ENCODE measurements at regions of chr14 and their contacts with region 1.

Region 1: DNA sequence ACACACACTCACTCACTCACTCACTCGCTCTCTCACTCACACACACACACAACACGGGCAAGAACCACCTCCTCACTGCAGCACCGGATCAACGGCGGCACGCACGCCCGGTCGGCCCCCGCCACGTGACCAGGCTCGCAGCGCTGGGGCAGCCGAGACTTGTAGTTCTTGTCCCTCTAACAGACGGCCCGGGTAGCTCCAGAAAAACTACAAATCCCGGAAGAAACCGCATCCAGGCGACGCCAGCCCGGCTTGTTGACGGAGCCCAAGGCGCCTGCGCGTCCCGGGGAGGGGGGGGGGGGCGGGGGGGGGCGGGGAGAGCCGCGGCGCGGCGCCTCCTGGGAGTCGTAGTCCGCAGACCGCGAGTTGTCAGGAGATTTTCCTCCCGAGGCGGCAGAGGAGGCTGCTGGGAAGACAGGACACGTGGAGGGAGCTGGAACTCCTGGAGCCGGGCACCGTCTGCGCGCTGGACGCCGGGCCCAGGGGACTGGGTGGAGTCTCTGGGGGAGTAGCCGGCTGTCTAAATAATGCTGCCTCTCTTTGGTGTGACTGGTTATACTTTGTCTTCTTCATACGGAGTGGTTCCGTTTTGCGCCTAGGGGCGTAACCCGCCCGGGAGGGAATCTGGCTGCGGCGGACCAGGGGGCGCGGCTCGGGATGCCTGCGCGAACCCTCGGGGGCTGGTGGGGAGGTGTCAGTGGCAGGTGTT is at the start of gene MAX:
- DNase-seq: peak; percentile 99
- H3K4me3 Mint-ChIP-seq: peak within 1 kb of the TSS; percentile 87
- H3K27ac Mint-ChIP-seq: peak within 1 kb of the TSS; percentile 91
- H3K4me1 Mint-ChIP-seq: peaks cover 30% of the 10 kb centered on the region
- H3K27me3 Mint-ChIP-seq: no peaks in the 10 kb centered on the region
- total RNA-seq, gene MAX: 67.9 to 75.1 TPM

Region 2: DNA sequence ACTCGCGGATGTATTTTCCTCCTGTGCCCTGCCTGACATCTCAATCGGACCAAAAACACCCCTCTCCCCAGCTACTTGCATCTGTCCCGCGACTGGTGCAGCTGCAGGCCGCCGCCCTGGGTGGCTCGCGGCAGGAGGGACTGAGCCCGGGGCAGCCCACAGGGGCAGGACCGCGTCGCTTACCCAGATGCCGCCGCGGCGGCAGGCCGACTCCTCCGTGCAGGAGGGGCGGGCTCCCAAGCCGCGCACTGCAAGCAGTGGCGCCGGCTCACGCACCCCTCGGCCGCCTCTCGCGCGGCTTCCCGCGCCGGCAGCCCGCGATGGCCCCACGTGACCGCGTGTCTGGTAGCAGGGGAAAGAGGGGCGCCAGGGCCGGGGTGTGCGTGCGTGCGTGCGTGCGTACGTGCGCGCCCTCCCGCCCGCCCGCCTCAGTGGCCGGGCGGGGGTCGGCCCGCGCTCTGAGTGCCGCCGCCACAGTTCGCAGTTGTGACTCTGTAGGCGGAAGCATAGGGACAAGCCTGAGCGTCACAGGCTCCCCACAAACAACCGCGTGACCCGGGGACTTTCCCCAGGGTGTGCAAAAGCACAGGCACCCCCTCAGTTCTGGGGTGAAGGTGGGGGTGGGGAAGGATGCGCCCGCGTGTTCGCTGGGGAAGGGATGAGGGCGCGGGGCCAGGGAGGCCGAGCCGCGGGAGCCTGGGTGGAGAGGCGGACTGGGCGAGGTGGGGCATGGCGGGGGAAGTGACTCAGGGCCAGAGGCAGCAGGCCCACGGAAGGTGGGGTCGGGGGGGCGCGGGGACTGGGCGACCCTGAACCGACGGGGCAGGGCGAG is 598.9 kb before region 1 on chr14 and contains the start of gene ZBTB25:
- CTCF ChIA-PET with region 1: no interaction called
- intact Hi-C with region 1: loop called (anchors 5 kb)
- DNase-seq: peak; percentile 94
- H3K4me3 Mint-ChIP-seq: peak within 1 kb of the TSS; percentile 91
- H3K27ac Mint-ChIP-seq: peak within 1 kb of the TSS; percentile 99
- H3K4me1 Mint-ChIP-seq: peaks cover 53% of the 10 kb centered on the region
- H3K27me3 Mint-ChIP-seq: no peaks in the 10 kb centered on the region
- total RNA-seq, gene ZBTB25: 22.6 to 23.5 TPM

Region 3: GRCh38 chr14:65080960-65081747 is 21.4 kb before region 1 on chr14:
- CTCF ChIA-PET with region 1: interaction called, 3 read pairs
- intact Hi-C with region 1: loop called (anchors 2 kb)
- DNase-seq: no peak
- H3K4me3 Mint-ChIP-seq: no peak overlapping the region
- H3K27ac Mint-ChIP-seq: peak overlapping the region; percentile 44
- H3K4me1 Mint-ChIP-seq: peaks cover 68% of the 10 kb centered on the region
- H3K27me3 Mint-ChIP-seq: no peaks in the 10 kb centered on the region

Region 4: DNA sequence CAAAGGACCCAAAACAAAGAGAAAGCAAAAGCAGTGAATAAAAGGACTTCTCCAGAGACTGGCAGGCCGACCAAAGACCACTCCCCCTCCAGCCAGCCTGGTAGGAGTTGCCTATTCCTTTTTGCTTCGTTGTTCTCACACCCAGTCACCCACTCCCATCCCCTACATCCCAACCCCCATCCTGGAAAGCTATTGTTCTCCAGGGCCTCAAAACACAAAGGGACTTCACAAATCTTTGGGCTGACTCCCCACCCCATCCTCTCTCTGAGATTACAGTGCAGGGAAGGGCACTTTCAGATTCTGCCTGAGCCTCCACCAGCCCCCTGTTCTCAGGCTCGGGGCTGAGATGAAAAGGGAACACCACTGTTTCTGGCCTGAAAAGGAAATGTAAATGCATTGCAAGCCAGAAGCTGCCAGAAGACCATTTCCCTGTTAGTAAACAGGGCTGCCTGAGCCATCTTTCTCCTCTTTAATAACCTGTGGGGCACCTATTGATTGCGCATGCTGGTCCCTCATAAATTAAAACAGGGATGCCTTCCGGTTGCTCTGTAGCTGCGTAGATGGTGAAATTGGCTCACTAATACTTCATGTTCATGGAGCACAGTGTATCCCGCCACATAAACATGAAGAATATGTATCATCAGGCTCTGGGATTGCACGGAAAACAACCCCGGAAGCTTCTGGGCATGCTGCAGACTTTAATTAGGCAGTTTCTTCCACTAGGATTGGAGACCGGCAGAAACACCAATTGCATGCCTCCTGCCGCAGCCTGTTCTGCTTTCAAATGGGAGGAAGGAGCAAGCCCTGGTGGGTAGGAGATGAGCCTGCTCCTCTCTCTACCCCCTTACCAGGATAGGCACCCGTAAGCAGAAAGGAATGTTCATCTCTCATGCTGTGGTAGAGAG is 179.6 kb after region 1 on chr14:
- CTCF ChIA-PET with region 1: no interaction called
- intact Hi-C with region 1: loop called (anchors 5 kb)
- DNase-seq: peak; percentile 22
- H3K4me3 Mint-ChIP-seq: peak overlapping the region; percentile 54
- H3K27ac Mint-ChIP-seq: peak overlapping the region; percentile 73
- H3K4me1 Mint-ChIP-seq: peaks cover 30% of the 10 kb centered on the region
- H3K27me3 Mint-ChIP-seq: no peaks in the 10 kb centered on the region

Region 5: DNA sequence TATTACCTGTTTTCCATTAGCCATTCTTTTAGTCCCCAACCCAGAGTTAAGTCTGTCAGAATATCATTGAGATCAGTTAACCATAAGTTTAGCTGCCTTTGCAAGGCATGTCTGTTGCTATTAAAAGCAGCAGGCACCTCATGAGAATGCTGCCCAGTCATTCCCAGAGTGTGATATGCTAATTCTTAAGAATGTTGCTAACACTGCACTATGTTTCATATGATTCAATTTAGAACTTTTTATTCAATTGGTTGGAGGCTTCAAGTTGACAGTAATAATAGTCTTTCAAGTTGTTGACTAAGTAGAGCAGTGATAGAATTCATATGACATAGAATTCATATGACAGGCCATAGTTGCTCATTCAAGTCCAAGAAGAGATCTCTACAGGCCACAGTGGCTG is 602.3 kb after region 1 on chr14:
- CTCF ChIA-PET with region 1: no interaction called
- intact Hi-C with region 1: loop called (anchors 1 kb)
- DNase-seq: peak; percentile 75
- H3K4me3 Mint-ChIP-seq: no peak overlapping the region
- H3K27ac Mint-ChIP-seq: peak overlapping the region; percentile 72
- H3K4me1 Mint-ChIP-seq: peaks cover 12% of the 10 kb centered on the region
- H3K27me3 Mint-ChIP-seq: no peaks in the 10 kb centered on the region